ENCODE measurements at regions of chr2 and their contacts with region 1.

Region 1: GRCh38 chr2:223944703-223945531 is at the start of gene WDFY1:
- DNase-seq: peak; percentile 74
- H3K4me3 Mint-ChIP-seq: peak within 1 kb of the TSS; percentile 87
- H3K27ac Mint-ChIP-seq: peak within 1 kb of the TSS; percentile 86
- H3K4me1 Mint-ChIP-seq: peaks cover 60% of the 10 kb centered on the region
- H3K27me3 Mint-ChIP-seq: no peaks in the 10 kb centered on the region
- total RNA-seq, gene WDFY1: 17.9 and 21.8 TPM in 2 replicates

Region 2: DNA sequence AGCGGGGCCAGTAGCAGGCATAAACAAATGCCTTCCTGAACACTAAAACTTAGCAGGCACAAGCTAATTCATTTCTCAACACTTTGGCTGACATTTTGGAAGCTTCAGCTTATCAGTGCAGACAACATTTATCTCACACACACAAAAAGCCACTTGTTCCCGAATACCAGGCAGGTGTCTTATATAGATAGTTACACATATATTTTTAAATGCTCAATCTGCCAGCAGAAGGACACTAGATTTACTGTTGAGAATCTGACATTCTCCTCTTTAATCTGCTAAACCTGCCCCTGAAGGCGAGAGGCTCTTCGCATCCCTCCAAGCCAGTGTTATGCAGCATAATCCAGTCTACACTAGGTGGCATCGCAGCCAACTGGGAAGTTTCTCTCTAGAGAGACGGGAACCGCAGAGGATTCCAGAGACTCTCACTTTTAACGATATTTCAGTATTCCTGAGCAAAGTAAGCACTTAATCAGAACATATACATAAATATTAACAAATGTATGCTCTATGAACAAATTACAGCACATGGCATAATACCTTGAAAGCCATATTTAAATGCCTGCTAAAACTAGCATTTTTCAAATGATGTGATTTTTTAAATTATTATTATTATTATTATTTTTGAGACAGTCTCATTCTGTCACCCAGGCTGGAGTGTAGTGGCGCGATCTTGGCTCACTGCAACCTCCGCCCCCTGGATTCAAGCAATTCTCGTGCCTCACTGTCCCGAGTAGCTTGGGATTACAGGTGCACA is 252.5 kb before region 1 on chr2:
- intact Hi-C with region 1: loop called (anchors 10 kb)
- DNase-seq: no peak
- H3K4me3 Mint-ChIP-seq: no peak overlapping the region
- H3K27ac Mint-ChIP-seq: no peak overlapping the region
- H3K4me1 Mint-ChIP-seq: no peaks in the 10 kb centered on the region
- H3K27me3 Mint-ChIP-seq: peaks cover 12% of the 10 kb centered on the region

Region 3: DNA sequence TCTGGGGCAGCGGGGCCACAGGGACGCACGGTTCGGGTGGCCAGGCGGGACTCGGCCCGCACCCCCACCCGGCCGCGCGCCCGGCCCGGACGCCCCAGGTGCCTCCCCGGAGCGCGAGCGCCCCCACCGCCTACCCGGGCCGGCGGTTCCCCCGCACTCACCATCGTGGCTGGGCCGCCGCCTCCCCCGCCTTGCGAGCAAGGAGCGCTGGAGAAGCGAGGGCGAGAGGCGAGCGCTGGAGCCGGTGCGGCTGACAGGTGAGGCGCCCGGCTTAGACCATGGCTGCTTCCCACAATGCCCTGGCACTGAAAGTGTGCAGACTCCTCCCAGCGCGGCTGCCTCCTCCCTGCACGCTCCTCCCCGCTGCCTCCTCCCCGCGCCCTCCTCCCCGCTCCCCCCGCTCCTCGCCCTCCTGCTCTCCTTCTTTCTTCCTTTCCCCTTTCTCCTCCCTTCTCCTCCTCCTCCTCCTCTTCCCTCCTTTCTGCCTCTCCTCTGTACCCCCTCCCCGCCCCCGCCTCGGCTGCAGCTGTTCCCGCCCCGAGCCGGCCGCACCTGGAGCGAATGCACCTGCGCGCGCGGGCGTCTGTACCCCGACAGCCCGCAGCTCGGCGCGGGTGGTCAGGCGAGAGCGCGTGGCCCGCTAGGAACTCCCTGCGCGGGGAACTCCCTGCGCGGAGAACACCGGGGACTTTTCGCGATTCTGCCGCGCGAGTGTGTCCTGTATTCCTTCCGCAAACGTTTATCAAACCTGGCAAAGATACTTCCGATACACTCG is 107.4 kb before region 1 on chr2 and contains the start of gene AP1S3:
- intact Hi-C with region 1: loop called (anchors 2 kb)
- DNase-seq: peak; percentile 63
- H3K4me3 Mint-ChIP-seq: peak within 1 kb of the TSS; percentile 92
- H3K27ac Mint-ChIP-seq: peak within 1 kb of the TSS; percentile 76
- H3K4me1 Mint-ChIP-seq: peaks cover 12% of the 10 kb centered on the region
- H3K27me3 Mint-ChIP-seq: peaks cover 7% of the 10 kb centered on the region
- total RNA-seq, gene AP1S3: 11.9 and 14.4 TPM in 2 replicates

Region 4: DNA sequence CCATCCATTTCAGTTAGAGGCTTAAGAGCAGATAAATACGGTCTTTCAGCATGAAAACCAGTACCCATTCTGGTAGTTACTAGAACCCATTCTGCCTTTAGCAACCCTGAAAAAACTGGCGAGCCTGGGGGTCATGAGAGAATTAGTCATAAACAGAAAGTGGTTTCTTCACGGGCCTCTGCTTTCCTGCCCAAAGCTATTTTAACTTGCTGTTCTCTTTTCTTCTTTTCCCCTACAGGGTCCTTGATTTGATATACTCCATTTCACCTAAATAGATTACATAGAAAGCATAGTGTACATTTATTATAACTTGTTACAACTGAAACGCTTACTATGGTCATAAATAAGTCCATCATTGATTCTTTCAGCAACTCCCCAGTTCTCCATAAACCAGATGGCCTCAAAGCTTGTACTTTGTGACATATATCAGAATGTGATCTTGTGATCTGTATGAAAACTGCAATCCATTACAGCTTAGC is 48.0 kb before region 1 on chr2:
- intact Hi-C with region 1: loop called (anchors 2 kb)
- DNase-seq: no peak
- H3K4me3 Mint-ChIP-seq: peak overlapping the region; percentile 1
- H3K27ac Mint-ChIP-seq: no peak overlapping the region
- H3K4me1 Mint-ChIP-seq: peaks cover 22% of the 10 kb centered on the region
- H3K27me3 Mint-ChIP-seq: no peaks in the 10 kb centered on the region

Region 5: DNA sequence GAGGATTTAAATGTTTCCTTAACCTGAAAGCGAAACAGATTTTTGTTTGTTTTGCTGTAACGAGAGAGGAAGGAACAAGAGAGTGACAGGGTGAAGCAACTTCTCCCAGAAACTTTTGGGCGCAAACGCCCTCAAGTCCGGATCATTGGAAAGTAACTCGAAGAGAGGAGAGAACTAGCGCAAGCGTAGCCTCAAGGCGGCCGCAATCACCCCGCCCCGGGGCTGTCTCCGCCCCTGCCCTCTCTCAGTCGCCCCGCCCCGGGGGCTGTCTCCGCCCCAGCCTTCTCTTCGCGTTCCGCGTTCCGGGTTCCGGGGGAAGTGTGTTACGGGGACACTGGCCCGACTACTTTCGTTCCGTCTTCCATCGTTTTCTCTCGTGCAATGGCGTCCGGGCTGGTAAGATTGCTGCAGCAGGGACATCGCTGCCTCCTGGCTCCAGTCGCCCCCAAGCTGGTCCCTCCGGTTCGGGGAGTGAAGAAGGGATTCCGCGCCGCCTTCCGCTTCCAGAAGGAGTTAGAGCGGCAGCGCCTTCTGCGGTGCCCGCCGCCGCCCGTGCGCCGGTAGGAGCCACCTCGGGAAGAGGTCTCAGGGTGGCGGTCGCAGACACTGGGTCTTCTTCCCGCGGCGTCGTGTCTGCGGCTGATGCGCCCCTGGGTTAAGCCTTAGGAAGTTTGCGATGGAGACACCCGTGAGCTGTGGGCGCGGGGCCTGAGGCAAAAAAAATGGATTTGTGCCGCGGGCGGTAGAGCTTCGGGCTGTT is 12.4 kb after region 1 on chr2 and contains the start of gene MRPL44:
- intact Hi-C with region 1: loop called (anchors 1 kb)
- DNase-seq: peak; percentile 96
- H3K4me3 Mint-ChIP-seq: peak within 1 kb of the TSS; percentile 96
- H3K27ac Mint-ChIP-seq: peak within 1 kb of the TSS; percentile 91
- H3K4me1 Mint-ChIP-seq: peaks cover 79% of the 10 kb centered on the region
- H3K27me3 Mint-ChIP-seq: no peaks in the 10 kb centered on the region
- total RNA-seq, gene MRPL44: 32.7 and 35.0 TPM in 2 replicates

Region 6: GRCh38 chr2:224025874-224026273 is 81.0 kb after region 1 on chr2:
- intact Hi-C with region 1: loop called (anchors 1 kb)
- DNase-seq: peak; percentile 65
- H3K4me3 Mint-ChIP-seq: peak overlapping the region; percentile 51
- H3K27ac Mint-ChIP-seq: peak overlapping the region; percentile 87
- H3K4me1 Mint-ChIP-seq: peaks cover 77% of the 10 kb centered on the region
- H3K27me3 Mint-ChIP-seq: no peaks in the 10 kb centered on the region

Measured in activated T-helper 1 cell treated with anti-CD3 and anti-CD28 coated beads, Interleukin-12 subunit alpha, Interleukin-12 subunit beta, Interleukin-2, Interleukin-4 antibody, amounts not matched to agents 30 ng/mL and 10 ng/mL and 1 ng/mL, durations not matched to agents 14 hours and 24 hours and 36 hours (primary cell).